Transverse colon (tissue), 4 donors: ENCODE measurements at regions of chr15 and their contacts with region 1.

Region 1: DNA sequence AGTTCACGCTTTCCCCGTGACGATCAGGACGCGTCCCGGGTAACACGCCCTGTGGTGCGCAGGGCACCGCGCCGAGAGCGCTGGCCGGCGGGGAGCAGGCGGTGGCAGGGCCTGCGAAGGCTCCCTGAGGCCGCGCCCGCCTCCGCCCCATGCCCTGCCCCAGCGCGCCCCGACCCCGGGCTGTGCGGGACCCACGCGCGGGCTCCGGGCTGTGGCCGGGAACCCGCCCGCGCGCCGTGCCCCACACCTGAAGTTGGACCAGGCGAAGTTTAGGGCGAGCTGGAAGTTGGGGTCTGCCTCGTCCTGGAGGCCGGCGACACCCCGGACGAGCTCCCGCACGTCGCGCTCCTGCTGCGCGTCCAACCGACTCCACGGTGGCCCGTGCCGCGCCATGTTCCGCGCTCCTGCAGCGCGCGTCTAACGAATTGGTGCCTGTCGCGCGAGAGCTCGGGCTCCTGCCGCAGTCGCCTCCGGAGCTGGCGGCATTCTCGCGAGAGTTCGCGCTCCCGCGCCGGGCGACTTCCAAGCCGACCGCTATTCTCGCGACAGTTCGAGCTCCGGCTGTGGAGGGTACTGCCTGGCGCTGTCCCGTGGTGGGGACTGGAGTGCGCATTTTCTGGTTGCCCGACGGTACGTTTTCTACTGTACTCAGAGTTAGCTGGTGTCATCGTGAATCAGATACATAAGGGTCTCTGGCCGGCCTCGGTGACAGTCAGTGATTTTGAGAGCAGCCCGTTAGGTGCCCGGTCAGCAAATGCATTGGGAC is at the start of gene TUBGCP5:
- DNase-seq: peak; percentile 98
- H3K4me3 ChIP-seq: peak within 1 kb of the TSS; percentile 69 to 79 (median 78)
- H3K27ac ChIP-seq: peak within 1 kb of the TSS; percentile 85 to 94 (median 92)
- H3K4me1 ChIP-seq: peaks cover 7 to 22% (median 13%) of the 10 kb centered on the region in 4 donors
- H3K27me3 ChIP-seq: no peaks in the 10 kb centered on the region
- CTCF ChIP-seq: peak; percentile 39 to 84 (median 52)
- EP300 ChIP-seq: no peak
- POLR2A ChIP-seq: peak; percentile 88
- total RNA-seq, gene TUBGCP5: 10.1 to 19.1 (median 10.7) TPM

Region 2: GRCh38 chr15:22949074-22949547 is 90.2 kb before region 1 on chr15:
- in situ Hi-C with region 1: loop called in 1 of 4 experiments (anchors 25 kb)
- intact Hi-C with region 1: loop called (anchors 10 kb)
- DNase-seq: peak; percentile 33
- H3K4me3 ChIP-seq: no peak overlapping the region
- H3K27ac ChIP-seq: peak overlapping the region; percentile 2 to 61 (median 14)
- H3K4me1 ChIP-seq: peaks cover 12 to 56% (median 16%) of the 10 kb centered on the region in 4 donors
- H3K27me3 ChIP-seq: no peaks in the 10 kb centered on the region
- CTCF ChIP-seq: no peak
- EP300 ChIP-seq: no peak
- POLR2A ChIP-seq: no peak

Region 3: GRCh38 chr15:23467110-23467600 is 427.8 kb after region 1 on chr15:
- in situ Hi-C with region 1: no loop called
- intact Hi-C with region 1: no loop called
- DNase-seq: no peak
- H3K4me3 ChIP-seq: no peak overlapping the region
- H3K27ac ChIP-seq: no peak overlapping the region
- H3K4me1 ChIP-seq: no peaks in the 10 kb centered on the region
- H3K27me3 ChIP-seq: no peaks in the 10 kb centered on the region
- CTCF ChIP-seq: peak in 4 of 5 experiments; percentile 35 to 57 (median 46)
- EP300 ChIP-seq: no peak
- POLR2A ChIP-seq: no peak